ENCODE measurements at regions of chr17 and their contacts with region 1.

Region 1: DNA sequence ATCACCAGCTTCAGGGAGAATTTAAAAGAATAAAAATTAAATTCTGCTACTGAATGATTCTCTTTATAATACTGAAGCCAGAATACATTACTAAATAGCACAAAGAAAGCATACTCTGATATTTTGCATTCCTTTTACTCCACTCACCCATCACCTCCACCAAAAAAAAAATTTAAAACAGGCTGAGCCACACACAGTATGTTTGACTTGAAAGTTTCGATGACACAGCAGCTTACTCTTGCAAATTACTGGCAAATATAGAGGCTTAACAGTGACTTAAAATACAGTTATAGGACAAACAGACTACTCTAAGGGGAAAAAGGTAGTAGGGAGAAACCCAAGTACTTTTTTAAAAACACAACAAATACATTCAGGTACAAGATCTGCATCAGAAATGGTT is 39.2 kb downstream of the GPATCH8 start:
- DNase-seq: no peak
- H3K4me3 ChIP-seq: no peak overlapping the region
- H3K4me3 Mint-ChIP-seq: no peak overlapping the region
- H3K27ac Mint-ChIP-seq: no peak overlapping the region
- H3K4me1 ChIP-seq: peaks cover 16% of the 10 kb centered on the region
- H3K4me1 Mint-ChIP-seq: peaks cover 14% of the 10 kb centered on the region
- H3K27me3 ChIP-seq: no peaks in the 10 kb centered on the region
- H3K27me3 Mint-ChIP-seq: no peaks in the 10 kb centered on the region
- CTCF ChIP-seq: no peak

Region 2: GRCh38 chr17:44444735-44445105 is 19.3 kb before region 1 on chr17:
- CTCF ChIA-PET with region 1: no interaction called
- POLR2A ChIA-PET with region 1: no interaction called
- intact Hi-C with region 1: no loop called
- DNase-seq: no peak
- H3K4me3 ChIP-seq: no peak overlapping the region
- H3K4me3 Mint-ChIP-seq: no peak overlapping the region
- H3K27ac Mint-ChIP-seq: no peak overlapping the region
- H3K4me1 ChIP-seq: no peaks in the 10 kb centered on the region
- H3K4me1 Mint-ChIP-seq: no peaks in the 10 kb centered on the region
- H3K27me3 ChIP-seq: no peaks in the 10 kb centered on the region
- H3K27me3 Mint-ChIP-seq: no peaks in the 10 kb centered on the region
- CTCF ChIP-seq: no peak

Region 3: GRCh38 chr17:44487170-44487569 is 23.1 kb after region 1 on chr17:
- CTCF ChIA-PET with region 1: no interaction called
- POLR2A ChIA-PET with region 1: no interaction called
- intact Hi-C with region 1: no loop called
- DNase-seq: no peak
- H3K4me3 ChIP-seq: no peak overlapping the region
- H3K4me3 Mint-ChIP-seq: no peak overlapping the region
- H3K27ac Mint-ChIP-seq: no peak overlapping the region
- H3K4me1 ChIP-seq: peaks cover 13% of the 10 kb centered on the region; the same call in 1 of the 2 replicates
- H3K4me1 Mint-ChIP-seq: peaks cover 10% of the 10 kb centered on the region
- H3K27me3 ChIP-seq: no peaks in the 10 kb centered on the region
- H3K27me3 Mint-ChIP-seq: no peaks in the 10 kb centered on the region
- CTCF ChIP-seq: no peak

Region 4: DNA sequence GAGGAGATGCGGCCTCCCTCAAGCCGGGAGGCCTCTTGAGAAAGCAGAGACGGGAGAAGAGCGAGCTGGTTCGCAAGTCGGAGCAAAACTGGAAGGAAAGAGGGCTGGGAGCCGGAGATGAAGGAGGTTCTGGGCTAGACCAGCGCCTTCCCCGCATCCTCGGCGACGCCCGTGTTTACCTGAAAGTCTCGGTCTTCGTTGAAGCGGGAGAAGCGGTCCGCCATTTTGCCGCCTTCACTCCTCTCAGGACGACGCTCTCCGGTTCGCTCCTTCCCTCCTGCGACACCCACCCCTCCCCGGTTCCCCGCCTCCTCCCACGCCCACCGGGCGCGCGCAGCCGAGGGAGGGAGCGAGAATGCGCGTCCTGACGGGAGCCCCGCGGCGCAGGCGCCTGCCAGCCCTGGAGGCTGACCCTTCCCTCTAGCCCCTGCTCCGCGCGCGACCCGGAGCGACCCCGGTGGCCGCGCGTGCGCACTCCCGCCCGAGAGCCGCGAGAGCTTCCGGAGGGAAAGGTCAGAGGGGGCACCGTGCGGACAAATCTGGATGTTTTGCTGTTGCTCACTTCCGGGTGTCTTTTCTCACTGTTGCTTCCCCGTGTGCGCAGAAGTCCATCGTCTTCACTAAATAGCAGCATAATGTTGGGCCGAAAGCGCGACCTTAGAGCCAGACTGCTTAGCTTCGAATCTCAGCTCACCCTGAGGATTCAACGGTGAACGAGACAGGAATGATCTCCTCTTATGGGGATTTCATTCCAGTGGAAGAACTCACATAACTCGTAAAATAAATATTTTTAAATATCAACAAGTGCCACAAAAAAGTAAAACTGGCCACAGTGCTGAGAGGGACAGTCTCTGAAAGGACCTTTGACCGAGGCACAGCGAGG is 39.4 kb after region 1 on chr17 and contains the start of gene GPATCH8:
- CTCF ChIA-PET with region 1: interaction called, 3 read pairs
- POLR2A ChIA-PET with region 1: interaction called, 5 read pairs
- intact Hi-C with region 1: loop called (anchors 5 kb)
- DNase-seq: peak; percentile 98 to 99
- H3K4me3 ChIP-seq: peak within 1 kb of the TSS; percentile 98
- H3K4me3 Mint-ChIP-seq: peak within 1 kb of the TSS; percentile 97
- H3K27ac Mint-ChIP-seq: peak within 1 kb of the TSS; percentile 98
- H3K4me1 ChIP-seq: peaks cover 14% of the 10 kb centered on the region
- H3K4me1 Mint-ChIP-seq: peaks cover 5% of the 10 kb centered on the region
- H3K27me3 ChIP-seq: no peaks in the 10 kb centered on the region
- H3K27me3 Mint-ChIP-seq: no peaks in the 10 kb centered on the region
- CTCF ChIP-seq: no peak
- total RNA-seq, gene GPATCH8: 53.4 and 55.5 TPM in 2 replicates

Region 5: GRCh38 chr17:44533533-44534246 is 69.7 kb after region 1 on chr17:
- CTCF ChIA-PET with region 1: no interaction called
- POLR2A ChIA-PET with region 1: no interaction called
- intact Hi-C with region 1: no loop called
- DNase-seq: peak; percentile 92 to 94
- H3K4me3 ChIP-seq: no peak overlapping the region
- H3K4me3 Mint-ChIP-seq: no peak overlapping the region
- H3K27ac Mint-ChIP-seq: peak overlapping the region; percentile 68
- H3K4me1 ChIP-seq: peaks cover 41% of the 10 kb centered on the region
- H3K4me1 Mint-ChIP-seq: peaks cover 22% of the 10 kb centered on the region
- H3K27me3 ChIP-seq: no peaks in the 10 kb centered on the region; the same call in 1 of the 2 replicates
- H3K27me3 Mint-ChIP-seq: no peaks in the 10 kb centered on the region
- CTCF ChIP-seq: peak; percentile 95

Region 6: GRCh38 chr17:44628243-44629188 is 164.5 kb after region 1 on chr17:
- CTCF ChIA-PET with region 1: no interaction called
- POLR2A ChIA-PET with region 1: no interaction called
- intact Hi-C with region 1: no loop called
- DNase-seq: no peak
- H3K4me3 ChIP-seq: no peak overlapping the region
- H3K4me3 Mint-ChIP-seq: no peak overlapping the region
- H3K27ac Mint-ChIP-seq: peak overlapping the region; percentile 21
- H3K4me1 ChIP-seq: peaks cover 11% of the 10 kb centered on the region
- H3K4me1 Mint-ChIP-seq: peaks cover 15% of the 10 kb centered on the region
- H3K27me3 ChIP-seq: no peaks in the 10 kb centered on the region
- H3K27me3 Mint-ChIP-seq: no peaks in the 10 kb centered on the region
- CTCF ChIP-seq: no peak

Measured in Caco-2 (cell line).